RWPE1 (cell line): ENCODE measurements at regions of chr17 and their contacts with region 1.

Region 1: GRCh38 chr17:7296189-7296902 is 1.9 kb upstream of the YBX2 start:
- DNase-seq: peak; percentile 55
- H3K27ac ChIP-seq: peak overlapping the region; percentile 81
- CTCF ChIP-seq: peak; percentile 94

Region 2: GRCh38 chr17:7280519-7281429 is 15.6 kb before region 1 on chr17:
- CTCF ChIA-PET with region 1: interaction called, 48 read pairs
- POLR2A ChIA-PET with region 1: interaction called, 4 read pairs
- DNase-seq: peak; percentile 77
- H3K27ac ChIP-seq: peak overlapping the region; percentile 81
- CTCF ChIP-seq: peak; percentile 93

Region 3: DNA sequence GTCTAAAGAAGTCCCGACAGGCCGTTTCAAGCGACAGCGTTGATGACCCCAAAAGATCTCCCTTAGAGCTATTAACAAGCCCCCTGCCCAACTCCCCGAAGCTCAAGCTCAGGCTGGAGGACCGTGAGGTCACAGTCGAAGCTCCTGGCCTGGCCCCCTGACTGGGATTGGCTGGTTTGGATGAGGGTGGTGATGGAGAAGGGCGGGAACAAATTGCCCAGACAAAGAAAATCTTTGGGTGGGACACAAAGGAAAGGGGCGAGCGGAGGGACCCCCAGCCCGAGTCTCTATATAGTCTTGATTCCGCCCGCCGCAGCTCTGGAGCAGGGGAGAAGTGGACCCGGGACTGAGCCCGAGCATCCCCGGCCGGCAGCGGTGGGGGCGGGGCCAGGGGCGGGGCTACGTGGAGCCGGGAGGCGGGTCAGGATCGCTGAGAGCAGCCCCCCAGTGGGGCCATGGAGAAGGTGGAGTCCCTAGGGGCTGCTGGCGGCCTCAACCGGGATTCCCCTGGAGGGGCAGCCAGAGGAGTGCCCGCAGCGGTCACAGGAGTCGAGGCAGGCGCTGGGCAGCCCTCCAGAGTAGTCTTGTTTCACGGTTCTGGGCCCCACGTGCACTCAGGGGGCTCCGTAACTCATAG is 33.8 kb after region 1 on chr17:
- CTCF ChIA-PET with region 1: no interaction called
- POLR2A ChIA-PET with region 1: no interaction called
- DNase-seq: peak; percentile 94
- H3K27ac ChIP-seq: peak overlapping the region; percentile 93
- CTCF ChIP-seq: no peak